ENCODE measurements at regions of chr14 and their contacts with region 1.

Region 1: GRCh38 chr14:95157327-95158189 is at the start of gene DICER1:
- DNase-seq: peak; percentile 87 to 91 (median 91)
- H3K4me3 ChIP-seq: peak within 1 kb of the TSS; percentile 61 to 86 (median 82)
- H3K4me3 Mint-ChIP-seq: peak within 1 kb of the TSS; percentile 86 to 95
- H3K27ac ChIP-seq: peak within 1 kb of the TSS; percentile 92
- H3K27ac Mint-ChIP-seq: peak within 1 kb of the TSS; percentile 95 to 98 (median 97)
- H3K4me1 ChIP-seq: peaks cover 38 to 42% of the 10 kb centered on the region in 2 donors
- H3K4me1 Mint-ChIP-seq: peaks cover 55% of the 10 kb centered on the region
- H3K27me3 ChIP-seq: no peaks in the 10 kb centered on the region
- H3K27me3 Mint-ChIP-seq: peaks cover 0 to 3% (median 0%) of the 10 kb centered on the region in 3 donors
- CTCF ChIP-seq: no peak
- polyA plus RNA-seq, gene DICER1: 26.5 to 38.4 (median 34.7) TPM

Region 2: GRCh38 chr14:95140060-95140858 is 17.3 kb before region 1 on chr14:
- intact Hi-C with region 1: loop called in 1 of 2 experiments (anchors 2 kb)
- DNase-seq: peak; percentile 69 to 90 (median 84)
- H3K4me3 ChIP-seq: peak overlapping the region in 1 of 3 experiments; percentile 1
- H3K4me3 Mint-ChIP-seq: peak overlapping the region in 1 of 2 donors; percentile 86
- H3K27ac ChIP-seq: peak overlapping the region in 1 of 2 donors; percentile 70
- H3K27ac Mint-ChIP-seq: peak overlapping the region; percentile 90 to 97 (median 96)
- H3K4me1 ChIP-seq: peaks cover 37 to 58% of the 10 kb centered on the region in 2 donors
- H3K4me1 Mint-ChIP-seq: peaks cover 47% of the 10 kb centered on the region
- H3K27me3 ChIP-seq: no peaks in the 10 kb centered on the region
- H3K27me3 Mint-ChIP-seq: peaks cover 0 to 3% (median 0%) of the 10 kb centered on the region in 3 donors
- CTCF ChIP-seq: no peak

Region 3: GRCh38 chr14:95515596-95516552 is 358.3 kb after region 1 on chr14:
- intact Hi-C with region 1: loop called in 1 of 2 experiments (anchors 10 kb)
- DNase-seq: peak; percentile 78 to 92 (median 91)
- H3K4me3 ChIP-seq: peak overlapping the region; percentile 62 to 90 (median 63)
- H3K4me3 Mint-ChIP-seq: peak overlapping the region; percentile 86 to 95
- H3K27ac ChIP-seq: peak overlapping the region; percentile 86 to 88
- H3K27ac Mint-ChIP-seq: peak overlapping the region; percentile 88 to 96 (median 95)
- H3K4me1 ChIP-seq: peaks cover 80 to 84% of the 10 kb centered on the region in 2 donors
- H3K4me1 Mint-ChIP-seq: peaks cover 76% of the 10 kb centered on the region
- H3K27me3 ChIP-seq: no peaks in the 10 kb centered on the region
- H3K27me3 Mint-ChIP-seq: peaks cover 0 to 4% (median 0%) of the 10 kb centered on the region in 3 donors
- CTCF ChIP-seq: peak; percentile 62

Region 4: GRCh38 chr14:95910628-95911027 is 753.1 kb after region 1 on chr14:
- intact Hi-C with region 1: no loop called
- DNase-seq: no peak
- H3K4me3 ChIP-seq: no peak overlapping the region
- H3K4me3 Mint-ChIP-seq: no peak overlapping the region
- H3K27ac ChIP-seq: no peak overlapping the region
- H3K27ac Mint-ChIP-seq: no peak overlapping the region
- H3K4me1 ChIP-seq: no peaks in the 10 kb centered on the region
- H3K4me1 Mint-ChIP-seq: no peaks in the 10 kb centered on the region
- H3K27me3 ChIP-seq: no peaks in the 10 kb centered on the region
- H3K27me3 Mint-ChIP-seq: peaks cover 4 to 7% (median 5%) of the 10 kb centered on the region in 3 donors
- CTCF ChIP-seq: no peak